ENCODE measurements at regions of chr2 and their contacts with region 1.

Region 1: GRCh38 chr2:224449212-224450147 is 47.6 kb upstream of the FAM124B start:
- DNase-seq: no peak
- ATAC-seq: no peak
- H3K4me3 ChIP-seq: no peak overlapping the region
- H3K27ac ChIP-seq: no peak overlapping the region
- H3K4me1 ChIP-seq: no peaks in the 10 kb centered on the region
- H3K27me3 ChIP-seq: no peaks in the 10 kb centered on the region
- CTCF ChIP-seq: peak in 4 of 5 experiments; percentile 20 to 52 (median 42)
- POLR2A ChIP-seq: no peak

Region 2: GRCh38 chr2:224357098-224357901 is 92.2 kb before region 1 on chr2:
- in situ Hi-C with region 1: loop called in 2 of 4 experiments (anchors 5 to 10 kb)
- intact Hi-C with region 1: no loop called
- DNase-seq: no peak
- ATAC-seq: peak in 1 of 2 donors; percentile 89
- H3K4me3 ChIP-seq: no peak overlapping the region
- H3K27ac ChIP-seq: no peak overlapping the region
- H3K4me1 ChIP-seq: no peaks in the 10 kb centered on the region
- H3K27me3 ChIP-seq: no peaks in the 10 kb centered on the region
- CTCF ChIP-seq: peak; percentile 76 to 82 (median 82)
- POLR2A ChIP-seq: no peak

Region 3: GRCh38 chr2:224369028-224369632 is 80.3 kb before region 1 on chr2:
- in situ Hi-C with region 1: loop called in 1 of 4 experiments (anchors 10 kb)
- intact Hi-C with region 1: no loop called
- DNase-seq: no peak
- ATAC-seq: no peak
- H3K4me3 ChIP-seq: no peak overlapping the region
- H3K27ac ChIP-seq: no peak overlapping the region
- H3K4me1 ChIP-seq: no peaks in the 10 kb centered on the region
- H3K27me3 ChIP-seq: no peaks in the 10 kb centered on the region
- CTCF ChIP-seq: peak in 4 of 5 experiments; percentile 32 to 69 (median 50)
- POLR2A ChIP-seq: no peak

Region 4: GRCh38 chr2:224381521-224382279 is 67.8 kb before region 1 on chr2:
- in situ Hi-C with region 1: no loop called
- intact Hi-C with region 1: loop called (anchors 10 kb)
- DNase-seq: no peak
- ATAC-seq: no peak
- H3K4me3 ChIP-seq: no peak overlapping the region
- H3K27ac ChIP-seq: no peak overlapping the region
- H3K4me1 ChIP-seq: peaks cover 3 to 13% of the 10 kb centered on the region in 2 donors
- H3K27me3 ChIP-seq: no peaks in the 10 kb centered on the region
- CTCF ChIP-seq: no peak
- POLR2A ChIP-seq: no peak

Region 5: DNA sequence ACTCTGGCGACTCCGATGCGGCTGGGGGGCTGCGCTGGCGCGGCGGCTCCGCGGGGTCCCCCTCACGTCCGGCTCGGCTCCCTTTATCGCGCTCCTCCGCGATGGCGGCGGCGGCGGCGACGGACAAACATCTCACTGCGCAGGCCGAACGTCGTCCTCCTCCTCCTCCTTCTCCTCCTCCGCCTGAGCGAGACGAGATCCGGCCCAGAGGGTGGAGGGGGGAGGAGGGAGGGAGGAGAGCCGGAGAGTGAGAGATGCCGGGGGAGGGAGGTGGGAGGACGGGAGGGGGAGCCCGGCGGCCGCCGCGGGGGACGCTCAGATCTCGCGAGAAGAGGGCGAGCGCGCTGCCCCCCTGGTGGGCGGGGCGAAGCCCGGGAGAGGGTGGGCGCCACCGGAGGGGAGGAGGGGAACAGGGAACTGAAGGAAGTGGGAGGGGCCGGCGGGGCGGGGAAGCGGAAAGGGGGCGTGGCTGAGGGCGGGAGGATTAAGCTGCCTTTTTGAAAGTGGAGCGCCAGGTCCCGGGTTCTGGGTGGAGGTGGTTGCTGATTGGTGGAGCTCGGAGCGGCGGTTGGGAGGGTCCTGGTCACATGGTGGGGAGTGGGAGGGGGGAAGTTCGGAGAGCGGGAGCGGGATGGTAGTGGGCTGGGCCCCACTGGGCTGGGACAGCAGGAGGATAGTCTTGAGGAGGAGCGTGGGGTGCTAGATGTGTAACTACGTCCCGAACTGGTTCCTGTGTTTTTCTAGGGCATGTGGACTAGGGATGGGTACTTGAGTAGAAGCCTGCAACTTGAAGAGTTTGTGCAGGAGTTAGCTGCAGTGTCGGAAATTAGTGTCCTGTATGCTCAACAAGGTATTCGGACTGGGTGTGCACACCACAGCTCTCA is 136.0 kb after region 1 on chr2 and contains the start of gene CUL3:
- in situ Hi-C with region 1: no loop called
- intact Hi-C with region 1: no loop called
- DNase-seq: peak; percentile 98
- ATAC-seq: peak; percentile 90
- H3K4me3 ChIP-seq: peak within 1 kb of the TSS; percentile 61 to 89 (median 80)
- H3K27ac ChIP-seq: peak within 1 kb of the TSS; percentile 91 to 95 (median 93)
- H3K4me1 ChIP-seq: peaks cover 27 to 28% of the 10 kb centered on the region in 2 donors
- H3K27me3 ChIP-seq: no peaks in the 10 kb centered on the region
- CTCF ChIP-seq: no peak
- POLR2A ChIP-seq: peak; percentile 87
- total RNA-seq, gene CUL3: 94.1 to 120 (median 109) TPM

Region 6: DNA sequence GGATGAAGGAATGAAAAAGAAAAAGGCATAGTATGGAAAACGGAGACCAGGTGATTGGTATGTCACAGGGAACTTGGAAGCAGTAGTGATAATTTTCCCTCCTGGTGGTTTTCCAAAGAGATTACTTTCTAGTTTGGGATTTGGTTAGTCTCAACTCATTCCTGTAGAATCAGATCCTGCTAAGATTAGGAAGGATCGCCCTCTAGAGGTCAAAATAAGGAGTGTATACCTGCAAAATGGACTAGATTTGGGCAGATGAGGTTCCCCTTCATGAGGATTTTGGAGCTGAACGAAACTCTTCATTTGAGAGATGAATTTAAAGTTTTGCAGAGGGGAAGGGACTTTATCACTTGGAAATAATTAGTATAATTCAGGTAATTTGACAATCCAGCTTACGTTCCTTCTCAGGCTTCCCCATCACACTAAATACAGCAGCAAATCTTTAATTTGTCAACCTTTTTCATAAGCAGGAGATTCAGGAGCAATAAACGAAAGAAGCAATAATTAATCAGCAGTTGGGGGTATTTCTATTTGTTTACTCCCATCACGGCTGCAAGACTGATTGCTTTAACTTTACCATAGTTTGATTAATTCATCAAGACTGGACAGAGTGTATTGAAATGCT is 201.4 kb after region 1 on chr2:
- in situ Hi-C with region 1: loop called in 1 of 4 experiments (anchors 5 kb)
- intact Hi-C with region 1: no loop called
- DNase-seq: no peak
- ATAC-seq: peak; percentile 75 to 80
- H3K4me3 ChIP-seq: no peak overlapping the region
- H3K27ac ChIP-seq: no peak overlapping the region
- H3K4me1 ChIP-seq: no peaks in the 10 kb centered on the region
- H3K27me3 ChIP-seq: no peaks in the 10 kb centered on the region
- CTCF ChIP-seq: peak; percentile 61 to 81 (median 74)
- POLR2A ChIP-seq: no peak

Measured in gastrocnemius medialis (tissue), 4 donors.